Gastrocnemius medialis (tissue), 4 donors: ENCODE measurements at regions of chr7 and their contacts with region 1.

Region 1: GRCh38 chr7:51162724-51163329 is 153.8 kb downstream of the COBL start:
- DNase-seq: peak; percentile 49 to 71
- ATAC-seq: peak; percentile 88 to 94
- H3K4me3 ChIP-seq: no peak overlapping the region
- H3K27ac ChIP-seq: no peak overlapping the region
- H3K4me1 ChIP-seq: peaks cover 0 to 3% of the 10 kb centered on the region in 2 donors
- H3K27me3 ChIP-seq: no peaks in the 10 kb centered on the region
- CTCF ChIP-seq: peak; percentile 56 to 86 (median 79)
- POLR2A ChIP-seq: no peak

Region 2: DNA sequence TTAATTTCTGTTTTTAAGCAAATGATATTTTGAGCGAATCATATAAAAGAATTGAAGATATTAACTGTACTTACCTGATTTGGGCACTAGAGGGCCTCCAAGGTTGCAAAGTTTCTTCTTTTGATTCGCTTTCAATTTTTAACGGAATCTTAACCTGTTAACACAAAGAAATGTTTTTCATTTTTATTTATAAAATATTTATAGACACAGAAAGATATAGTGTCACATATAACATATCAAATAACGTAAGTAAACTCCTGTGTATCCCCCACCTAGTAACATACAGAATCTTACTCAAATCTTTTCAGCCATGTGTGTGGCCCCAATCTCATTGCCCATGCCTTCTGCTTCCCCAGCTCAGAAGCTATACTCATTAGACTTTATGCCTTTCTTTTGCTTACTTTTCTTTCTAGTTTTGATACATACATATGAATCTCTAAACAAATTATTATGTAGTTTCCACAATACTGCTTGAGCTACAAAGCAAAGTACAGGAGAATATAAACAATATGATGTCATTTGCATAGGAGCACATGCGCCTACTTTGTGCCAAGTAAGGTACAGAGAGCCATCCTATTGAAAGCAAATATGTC is 1020.3 kb before region 1 on chr7:
- in situ Hi-C with region 1: loop called in 2 of 4 experiments (anchors 25 kb)
- intact Hi-C with region 1: no loop called
- DNase-seq: no peak
- ATAC-seq: no peak
- H3K4me3 ChIP-seq: no peak overlapping the region
- H3K27ac ChIP-seq: no peak overlapping the region
- H3K4me1 ChIP-seq: no peaks in the 10 kb centered on the region
- H3K27me3 ChIP-seq: peaks cover 0 to 7% (median 0%) of the 10 kb centered on the region in 3 donors
- CTCF ChIP-seq: peak in 3 of 5 experiments; percentile 46 to 66 (median 66)
- POLR2A ChIP-seq: no peak

Region 3: DNA sequence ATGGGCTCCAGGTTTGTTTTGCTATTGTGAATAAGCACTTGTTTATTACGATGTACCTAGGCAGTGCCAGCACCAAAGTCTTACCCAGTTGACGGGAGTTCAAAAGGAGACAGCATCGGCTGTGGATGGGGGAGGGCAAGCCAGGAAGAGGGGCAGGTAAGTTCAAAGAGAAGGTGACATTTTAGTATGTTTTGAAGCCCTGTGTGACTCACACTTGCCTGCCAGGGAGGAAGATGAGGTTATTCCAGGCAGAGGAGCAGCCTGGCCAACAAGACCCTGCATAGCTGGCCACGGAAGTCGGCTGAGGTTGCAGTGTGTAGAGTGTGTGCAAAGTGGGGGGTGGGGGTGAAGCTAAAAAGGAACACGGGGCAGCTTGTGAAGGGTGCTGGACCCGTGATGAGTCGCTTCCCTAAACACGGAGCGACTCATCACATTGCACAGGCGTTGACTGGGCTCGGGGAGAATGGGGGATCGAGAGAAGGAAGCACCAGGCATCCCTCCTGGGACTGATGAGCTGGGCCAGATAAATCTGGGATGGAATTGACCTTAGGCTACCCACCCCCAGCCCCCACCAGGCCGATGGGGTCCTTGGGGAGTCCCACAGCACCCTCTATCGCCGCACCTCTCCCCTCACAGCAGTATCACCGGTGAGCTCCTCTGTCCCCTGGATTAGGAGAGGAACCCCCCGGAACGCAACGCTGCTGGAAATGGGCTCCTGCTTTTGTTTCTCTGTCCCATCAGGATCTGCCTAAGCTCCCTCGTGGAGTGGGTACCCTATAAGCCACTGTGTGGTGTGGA is 956.2 kb before region 1 on chr7:
- in situ Hi-C with region 1: loop called in 3 of 4 experiments (anchors 10 kb)
- intact Hi-C with region 1: loop called (anchors 5 kb)
- DNase-seq: no peak
- ATAC-seq: no peak
- H3K4me3 ChIP-seq: no peak overlapping the region
- H3K27ac ChIP-seq: no peak overlapping the region
- H3K4me1 ChIP-seq: no peaks in the 10 kb centered on the region
- H3K27me3 ChIP-seq: no peaks in the 10 kb centered on the region
- CTCF ChIP-seq: no peak
- POLR2A ChIP-seq: no peak

Region 4: DNA sequence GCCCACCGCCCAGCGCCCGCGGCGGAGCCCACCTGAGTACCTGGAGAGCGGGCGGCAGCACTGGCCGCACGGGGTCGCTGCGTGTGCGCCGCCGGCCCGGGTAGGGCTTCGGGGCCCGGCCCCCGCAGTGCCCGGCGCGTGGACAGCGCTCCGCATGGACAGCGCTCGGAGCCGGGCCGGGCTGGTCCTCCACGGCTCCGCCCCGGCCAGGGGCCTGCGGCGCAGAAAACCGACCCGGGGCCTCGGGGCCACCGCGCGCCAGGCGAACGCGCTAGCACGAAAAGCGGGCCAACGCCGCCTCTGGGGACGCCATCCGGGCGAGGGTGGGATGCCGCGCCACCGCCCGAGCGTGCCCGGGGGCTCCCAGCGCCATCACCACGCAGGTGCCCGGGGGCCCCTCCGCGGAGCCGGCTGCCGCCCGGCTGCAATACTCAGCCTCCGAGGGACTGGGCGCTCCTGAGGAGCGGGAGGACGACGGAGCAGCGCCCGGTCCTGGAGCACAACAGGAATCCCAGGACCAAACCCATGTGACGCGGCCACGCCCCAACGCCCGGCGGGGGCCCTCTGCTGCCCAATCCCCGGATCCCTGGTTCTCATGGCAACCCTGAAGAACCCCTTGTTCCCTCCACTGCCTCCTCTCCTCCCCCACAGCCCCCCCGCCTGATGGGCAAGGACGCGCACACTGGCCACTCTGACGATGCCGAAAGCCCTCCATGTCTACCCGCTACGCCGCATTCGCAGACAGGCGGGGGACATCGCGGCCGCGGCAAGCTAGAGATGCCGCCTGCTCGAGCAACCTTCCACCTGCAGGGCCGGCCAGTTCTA is 380.2 kb before region 1 on chr7 and contains the start of gene GRB10:
- in situ Hi-C with region 1: no loop called
- intact Hi-C with region 1: loop called (anchors 5 kb)
- DNase-seq: no peak
- ATAC-seq: peak; percentile 65 to 69
- H3K4me3 ChIP-seq: peak within 1 kb of the TSS; percentile 43 to 59 (median 50)
- H3K27ac ChIP-seq: peak within 1 kb of the TSS in 3 of 4 donors; percentile 44 to 70 (median 51)
- H3K4me1 ChIP-seq: peaks cover 44 to 51% of the 10 kb centered on the region in 2 donors
- H3K27me3 ChIP-seq: no peaks in the 10 kb centered on the region
- CTCF ChIP-seq: peak in 3 of 5 experiments; percentile 36 to 57 (median 36)
- POLR2A ChIP-seq: no peak
- total RNA-seq, gene GRB10: 40.4 to 88.6 (median 61.1) TPM

Region 5: DNA sequence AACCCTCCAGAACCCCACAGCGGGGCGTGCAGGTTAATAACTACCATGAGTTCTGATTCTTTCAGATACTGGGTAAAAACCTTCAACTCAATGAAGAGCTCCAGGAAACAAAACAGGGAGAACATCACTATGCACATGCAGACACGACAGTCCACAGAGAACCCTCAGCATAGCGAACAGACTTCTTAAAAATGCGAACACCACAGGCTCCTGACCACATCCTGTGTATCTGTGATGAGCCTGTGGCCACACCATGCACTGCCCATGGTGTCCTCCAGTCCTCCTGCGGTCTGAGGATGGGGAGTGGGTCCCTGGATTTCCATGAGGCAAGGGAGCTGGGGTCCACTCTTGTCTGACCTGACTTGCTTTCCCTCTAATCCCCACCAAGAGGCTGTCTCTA is 46.6 kb after region 1 on chr7:
- in situ Hi-C with region 1: no loop called
- intact Hi-C with region 1: no loop called
- DNase-seq: no peak
- ATAC-seq: no peak
- H3K4me3 ChIP-seq: no peak overlapping the region
- H3K27ac ChIP-seq: no peak overlapping the region
- H3K4me1 ChIP-seq: no peaks in the 10 kb centered on the region
- H3K27me3 ChIP-seq: no peaks in the 10 kb centered on the region
- CTCF ChIP-seq: no peak
- POLR2A ChIP-seq: no peak

Region 6: GRCh38 chr7:51357821-51358220 is 195.0 kb after region 1 on chr7:
- in situ Hi-C with region 1: loop called in 2 of 4 experiments (anchors 5 to 10 kb)
- intact Hi-C with region 1: loop called (anchors 1 kb)
- DNase-seq: no peak
- ATAC-seq: peak in 1 of 2 donors; percentile 27
- H3K4me3 ChIP-seq: no peak overlapping the region
- H3K27ac ChIP-seq: no peak overlapping the region
- H3K4me1 ChIP-seq: no peaks in the 10 kb centered on the region
- H3K27me3 ChIP-seq: no peaks in the 10 kb centered on the region
- CTCF ChIP-seq: peak; percentile 11 to 40 (median 16)
- POLR2A ChIP-seq: no peak

Region 7: DNA sequence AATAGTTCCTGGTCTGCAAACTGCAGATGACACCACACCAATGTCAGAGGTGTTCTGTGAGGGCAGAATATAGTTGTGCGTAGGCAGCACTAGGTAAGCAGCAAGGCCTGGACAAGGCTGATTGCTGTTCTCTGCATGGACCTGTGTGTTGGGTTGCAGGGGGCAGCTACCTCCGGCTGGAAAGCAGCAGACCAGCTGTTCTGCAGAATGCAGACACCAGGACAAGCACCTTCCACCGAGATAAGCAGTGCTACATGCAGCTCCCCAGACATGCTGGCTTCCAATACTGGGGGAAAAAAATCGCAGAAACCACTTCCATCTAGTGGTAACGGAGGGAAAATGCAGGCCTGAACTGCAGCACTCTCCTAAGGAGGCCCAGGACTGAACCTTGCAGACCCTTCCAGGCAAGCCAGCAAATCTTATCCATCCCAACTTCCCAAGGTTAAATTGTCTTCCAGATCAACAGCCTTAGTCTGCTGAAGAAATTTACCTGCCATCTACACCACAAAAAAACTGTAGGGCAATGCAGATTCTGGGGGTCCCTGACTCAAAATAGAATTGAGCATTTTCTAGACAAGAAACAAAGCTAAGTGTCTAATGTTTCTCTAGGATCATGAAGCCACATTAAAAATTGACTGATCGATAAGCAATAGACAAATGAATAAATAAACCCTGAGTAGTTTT is 204.2 kb after region 1 on chr7:
- in situ Hi-C with region 1: loop called in 3 of 4 experiments (anchors 5 to 10 kb)
- intact Hi-C with region 1: loop called (anchors 1 kb)
- DNase-seq: peak; percentile 9 to 29
- ATAC-seq: peak; percentile 89 to 96
- H3K4me3 ChIP-seq: no peak overlapping the region
- H3K27ac ChIP-seq: no peak overlapping the region
- H3K4me1 ChIP-seq: no peaks in the 10 kb centered on the region
- H3K27me3 ChIP-seq: no peaks in the 10 kb centered on the region
- CTCF ChIP-seq: peak; percentile 64 to 80 (median 75)
- POLR2A ChIP-seq: no peak